Aorta (tissue), 5 donors: ENCODE measurements at regions of chr20 and their contacts with region 1.

Region 1: GRCh38 chr20:62352402-62353288 is 14.5 kb downstream of the LAMA5 start:
- DNase-seq: peak; percentile 86 to 94
- ATAC-seq: peak; percentile 9
- H3K4me3 ChIP-seq: no peak overlapping the region
- H3K27ac ChIP-seq: peak overlapping the region in 1 of 2 donors; percentile 58
- H3K4me1 ChIP-seq: no peaks in the 10 kb centered on the region
- H3K27me3 ChIP-seq: no peaks in the 10 kb centered on the region

Region 2: DNA sequence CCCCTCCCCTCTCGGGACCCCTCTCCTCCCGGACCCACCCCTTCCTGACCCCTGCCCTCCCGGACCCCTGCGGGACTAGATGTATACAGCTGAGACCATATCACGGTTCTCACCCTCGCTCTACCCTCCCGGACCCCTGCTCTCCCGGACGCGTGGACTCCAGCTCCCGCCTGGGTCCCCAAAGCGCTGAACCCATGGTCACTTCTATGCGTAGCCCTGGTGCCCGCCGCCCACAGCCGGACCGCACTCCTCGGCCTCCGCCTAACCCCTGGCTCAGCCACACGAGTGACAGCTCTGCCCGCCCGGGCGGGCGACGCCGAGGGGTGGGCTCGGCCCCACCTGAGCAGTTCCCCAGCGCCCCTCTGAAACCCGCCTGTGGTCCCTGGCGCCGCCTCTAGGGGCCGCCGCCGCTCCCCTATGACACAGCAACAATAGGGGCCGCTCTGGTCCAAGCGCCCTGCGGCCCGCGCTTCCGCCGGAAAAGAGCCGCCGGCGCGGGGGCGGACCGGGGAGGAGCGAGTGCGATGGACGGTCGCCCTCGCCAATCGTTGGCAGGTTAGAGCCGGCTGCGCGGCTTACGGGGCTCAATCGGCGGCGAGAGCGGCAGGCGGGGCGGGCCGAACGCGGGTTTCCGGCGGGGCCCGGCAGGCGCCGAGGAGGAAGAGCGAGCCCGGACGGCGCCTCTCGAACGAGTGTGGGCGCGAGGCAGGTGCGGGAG is 50.1 kb before region 1 on chr20 and contains the start of gene ADRM1:
- intact Hi-C with region 1: loop called in 1 of 2 experiments (anchors 2 kb)
- DNase-seq: peak; percentile 97 to 98
- ATAC-seq: peak; percentile 95
- H3K4me3 ChIP-seq: peak within 1 kb of the TSS; percentile 86 to 87
- H3K27ac ChIP-seq: peak within 1 kb of the TSS; percentile 58 to 94
- H3K4me1 ChIP-seq: no peaks in the 10 kb centered on the region
- H3K27me3 ChIP-seq: no peaks in the 10 kb centered on the region
- total RNA-seq, gene ADRM1: 56.1 to 61.8 TPM

Region 3: DNA sequence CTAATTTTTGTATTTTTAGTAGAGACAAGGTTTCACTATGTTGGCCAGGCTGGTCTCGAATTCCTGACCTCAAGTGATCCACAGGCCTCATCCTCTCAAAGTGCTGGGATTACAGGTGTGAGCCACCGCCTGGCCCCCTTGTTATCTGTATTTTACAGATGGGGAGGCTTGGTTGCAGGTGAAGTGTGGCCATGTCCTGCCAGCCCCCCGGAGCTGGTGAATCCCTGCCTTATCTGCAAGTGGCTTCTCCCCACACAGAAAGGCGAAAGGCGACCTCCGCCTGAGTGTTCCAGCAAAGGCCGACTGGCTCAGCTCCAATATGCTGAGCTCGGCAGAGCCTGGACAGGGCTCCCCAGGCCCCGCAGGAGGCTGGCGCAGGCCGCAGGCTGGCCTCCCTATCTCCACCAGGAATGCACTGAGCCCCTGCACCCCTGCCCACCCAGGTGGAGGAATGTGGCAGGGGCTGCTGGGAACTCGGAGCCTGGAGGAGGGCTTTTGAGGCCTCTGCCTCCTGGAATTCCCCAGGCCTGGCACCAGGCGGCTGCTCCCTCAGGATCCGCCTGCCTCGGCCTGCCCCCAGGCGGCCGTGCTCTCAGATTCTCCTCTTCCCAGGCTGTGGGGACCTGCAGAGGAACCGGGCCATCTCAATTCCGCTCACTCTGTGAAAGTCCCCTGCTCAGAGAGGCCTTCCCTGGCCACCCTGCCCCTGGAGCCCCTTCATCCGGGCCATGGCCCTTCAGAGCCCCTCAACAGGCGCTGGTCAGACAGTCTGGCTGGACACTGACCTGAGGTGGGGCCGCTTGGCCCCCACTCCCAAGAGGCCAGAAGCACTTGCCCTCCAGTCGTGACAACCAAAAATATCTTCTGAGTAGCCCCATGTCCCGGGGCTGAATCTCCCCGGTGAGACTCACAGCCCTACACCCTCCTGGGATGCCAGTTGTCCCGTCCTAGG is 23.7 kb after region 1 on chr20:
- intact Hi-C with region 1: loop called in 1 of 2 experiments (anchors 2 kb)
- DNase-seq: peak in 1 of 2 donors; percentile 80
- ATAC-seq: peak; percentile 75
- H3K4me3 ChIP-seq: no peak overlapping the region
- H3K27ac ChIP-seq: peak overlapping the region in 1 of 2 donors; percentile 70
- H3K4me1 ChIP-seq: no peaks in the 10 kb centered on the region
- H3K27me3 ChIP-seq: no peaks in the 10 kb centered on the region

Region 4: GRCh38 chr20:62386383-62387218 is 34.0 kb after region 1 on chr20 and contains the start of gene RPS21:
- intact Hi-C with region 1: loop called in 1 of 2 experiments (anchors 5 kb)
- DNase-seq: peak; percentile 97 to 98
- ATAC-seq: peak; percentile 94
- H3K4me3 ChIP-seq: peak within 1 kb of the TSS; percentile 55 to 66
- H3K27ac ChIP-seq: peak within 1 kb of the TSS; percentile 5 to 19
- H3K4me1 ChIP-seq: no peaks in the 10 kb centered on the region
- H3K27me3 ChIP-seq: no peaks in the 10 kb centered on the region
- total RNA-seq, gene RPS21: 965 to 1,002 TPM

Region 5: DNA sequence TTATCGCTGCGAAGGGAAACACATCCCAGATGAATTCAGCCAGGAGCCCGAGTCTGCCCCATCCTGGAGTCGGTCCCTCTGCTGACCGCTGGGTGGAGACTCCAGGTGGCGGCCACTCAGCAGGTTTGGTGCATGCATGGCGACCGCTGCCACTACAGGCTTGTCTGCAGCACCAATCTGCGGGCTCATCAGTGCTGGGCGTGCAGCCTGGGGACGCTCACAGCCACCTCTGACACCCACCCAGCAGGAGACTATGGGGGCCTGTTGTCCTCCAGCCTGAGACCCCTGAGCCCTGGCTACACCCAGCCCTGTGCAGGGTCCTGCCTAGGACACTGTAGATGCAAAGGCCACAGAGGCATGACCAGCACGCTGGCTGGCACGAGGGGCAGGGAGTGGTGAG is 163.7 kb after region 1 on chr20:
- intact Hi-C with region 1: no loop called
- DNase-seq: no peak
- ATAC-seq: no peak
- H3K4me3 ChIP-seq: no peak overlapping the region
- H3K27ac ChIP-seq: no peak overlapping the region
- H3K4me1 ChIP-seq: no peaks in the 10 kb centered on the region
- H3K27me3 ChIP-seq: no peaks in the 10 kb centered on the region

Region 6: GRCh38 chr20:62571667-62572344 is 219.2 kb after region 1 on chr20:
- intact Hi-C with region 1: no loop called
- DNase-seq: no peak
- ATAC-seq: no peak
- H3K4me3 ChIP-seq: no peak overlapping the region
- H3K27ac ChIP-seq: no peak overlapping the region
- H3K4me1 ChIP-seq: no peaks in the 10 kb centered on the region
- H3K27me3 ChIP-seq: no peaks in the 10 kb centered on the region

Region 7: DNA sequence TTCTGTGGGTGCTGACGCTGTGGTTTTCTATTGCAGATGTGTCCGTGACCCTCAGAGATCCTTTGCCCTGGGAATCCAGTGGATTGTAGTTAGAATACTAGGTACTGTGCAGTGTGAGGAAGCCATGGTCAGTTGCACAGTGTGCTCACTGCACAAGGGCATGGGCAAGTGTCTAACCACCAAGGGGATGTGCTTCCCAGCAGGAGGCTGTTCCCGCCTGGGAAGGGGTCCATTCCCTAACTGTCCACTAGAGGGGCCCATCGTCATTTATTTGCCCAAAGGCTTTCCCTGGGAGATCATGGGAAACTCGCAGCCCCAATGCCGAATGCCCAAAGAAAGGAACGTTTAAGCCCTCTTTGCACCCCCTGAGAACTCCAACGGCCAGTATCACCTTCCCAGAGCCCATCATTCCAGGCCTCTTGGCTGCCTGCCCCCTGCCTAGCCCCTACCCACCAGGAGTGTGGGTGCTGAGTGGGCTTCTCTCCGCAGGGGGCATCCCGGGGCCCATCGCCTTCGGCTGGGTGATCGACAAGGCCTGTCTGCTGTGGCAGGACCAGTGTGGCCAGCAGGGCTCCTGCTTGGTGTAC is 315.9 kb after region 1 on chr20:
- intact Hi-C with region 1: no loop called
- DNase-seq: peak in 1 of 2 donors; percentile 74
- ATAC-seq: peak; percentile 67
- H3K4me3 ChIP-seq: no peak overlapping the region
- H3K27ac ChIP-seq: no peak overlapping the region
- H3K4me1 ChIP-seq: no peaks in the 10 kb centered on the region
- H3K27me3 ChIP-seq: no peaks in the 10 kb centered on the region